ENCODE measurements at regions of chr2 and their contacts with region 1.

Region 1: DNA sequence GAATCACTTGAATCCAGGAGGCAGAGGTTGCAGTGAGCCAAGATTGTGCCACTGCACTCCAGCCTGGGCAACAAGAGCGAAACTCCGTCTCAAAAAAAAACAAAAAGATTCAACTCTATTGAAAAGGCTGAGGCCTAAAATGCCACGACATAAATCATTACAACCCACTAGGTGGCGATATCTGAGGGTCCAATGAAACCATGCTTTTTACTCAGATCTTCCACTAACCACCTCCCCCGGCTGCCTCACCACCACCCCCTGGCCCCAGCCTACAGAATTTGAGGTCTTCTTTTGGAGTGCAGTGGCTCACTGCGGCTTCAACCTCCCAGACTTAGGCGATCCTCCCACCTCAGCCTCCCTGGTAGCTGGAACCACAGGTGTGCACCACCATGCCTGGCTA is 57.5 kb downstream of the AP1S3 start:
- DNase-seq: peak; percentile 61
- H3K4me3 Mint-ChIP-seq: no peak overlapping the region
- H3K27ac Mint-ChIP-seq: no peak overlapping the region
- H3K4me1 Mint-ChIP-seq: no peaks in the 10 kb centered on the region
- H3K27me3 Mint-ChIP-seq: no peaks in the 10 kb centered on the region

Region 2: DNA sequence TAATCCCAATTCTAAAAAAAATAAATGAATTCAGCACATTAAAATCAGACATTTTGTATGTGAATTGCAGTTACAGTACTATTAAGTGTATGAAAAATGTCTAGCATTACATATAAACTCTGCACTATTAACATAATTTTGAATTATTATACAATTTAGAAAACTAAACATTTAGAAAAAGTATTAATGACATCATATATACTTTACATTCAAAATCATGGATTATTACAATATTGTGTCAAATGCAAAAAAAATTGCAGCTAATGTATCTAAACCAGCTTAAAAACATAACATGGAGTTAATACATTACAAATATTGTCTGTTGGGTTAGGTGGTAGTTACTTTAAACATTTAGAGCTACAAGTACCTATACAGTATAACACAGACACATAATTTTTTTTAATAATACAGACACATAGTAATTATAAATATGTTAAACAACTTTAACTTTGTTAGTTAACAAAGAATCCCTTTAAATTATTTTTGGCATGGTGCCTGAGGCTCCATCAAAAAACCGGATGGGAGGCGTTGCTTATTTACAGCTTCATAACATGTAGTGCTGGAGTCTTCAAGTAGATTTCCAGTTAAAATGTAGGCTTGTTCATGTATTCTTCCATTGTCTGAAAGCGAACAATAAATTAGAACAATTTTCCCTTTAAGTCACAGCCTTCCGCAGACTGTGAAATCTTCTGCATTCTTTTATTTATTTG is 21.6 kb before region 1 on chr2:
- CTCF ChIA-PET with region 1: no interaction called
- intact Hi-C with region 1: no loop called
- DNase-seq: no peak
- H3K4me3 Mint-ChIP-seq: no peak overlapping the region
- H3K27ac Mint-ChIP-seq: no peak overlapping the region
- H3K4me1 Mint-ChIP-seq: peaks cover 6% of the 10 kb centered on the region
- H3K27me3 Mint-ChIP-seq: no peaks in the 10 kb centered on the region

Region 3: DNA sequence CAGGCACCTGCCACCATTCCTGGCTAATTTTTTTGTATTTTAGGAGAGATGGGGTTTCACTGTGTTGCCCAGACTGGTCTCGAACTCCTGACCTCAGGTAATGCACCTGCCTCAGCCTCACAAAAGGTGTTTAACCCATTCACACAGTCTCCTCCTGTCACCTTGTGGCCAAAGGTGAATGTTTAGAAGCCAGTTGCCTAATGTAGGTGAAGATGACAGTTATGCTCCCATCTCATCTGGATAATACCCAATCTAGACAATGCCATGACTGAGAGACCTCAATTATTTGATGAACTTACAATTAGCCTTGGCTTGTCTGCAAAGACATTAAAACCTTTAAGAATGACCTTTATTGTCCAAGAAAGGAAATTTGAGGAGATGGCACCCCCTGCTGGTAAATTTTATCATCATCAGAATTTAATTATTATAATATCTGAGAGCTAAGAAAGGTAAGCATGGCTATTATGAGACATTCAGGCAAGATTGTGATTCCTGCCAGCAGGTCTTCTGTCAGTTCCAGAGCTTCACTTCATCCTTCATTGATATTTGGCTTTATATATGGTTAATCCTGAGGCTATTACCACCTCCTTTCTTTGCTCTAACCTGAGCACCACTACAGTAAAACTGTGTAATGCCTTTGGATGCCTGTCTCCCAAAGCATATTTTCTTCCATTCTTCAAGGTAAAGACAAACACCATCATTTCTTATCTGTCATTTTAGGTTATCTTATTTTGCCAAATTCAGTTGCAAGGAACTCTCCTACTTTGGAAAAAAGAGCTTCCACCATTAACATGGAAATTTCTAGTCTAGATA is 504.5 kb after region 1 on chr2:
- CTCF ChIA-PET with region 1: interaction called, 3 read pairs
- intact Hi-C with region 1: loop called (anchors 1 kb)
- DNase-seq: peak; percentile 50
- H3K4me3 Mint-ChIP-seq: no peak overlapping the region
- H3K27ac Mint-ChIP-seq: no peak overlapping the region
- H3K4me1 Mint-ChIP-seq: no peaks in the 10 kb centered on the region
- H3K27me3 Mint-ChIP-seq: peaks cover 25% of the 10 kb centered on the region